ENCODE measurements at regions of chr17 and their contacts with region 1.

Region 1: DNA sequence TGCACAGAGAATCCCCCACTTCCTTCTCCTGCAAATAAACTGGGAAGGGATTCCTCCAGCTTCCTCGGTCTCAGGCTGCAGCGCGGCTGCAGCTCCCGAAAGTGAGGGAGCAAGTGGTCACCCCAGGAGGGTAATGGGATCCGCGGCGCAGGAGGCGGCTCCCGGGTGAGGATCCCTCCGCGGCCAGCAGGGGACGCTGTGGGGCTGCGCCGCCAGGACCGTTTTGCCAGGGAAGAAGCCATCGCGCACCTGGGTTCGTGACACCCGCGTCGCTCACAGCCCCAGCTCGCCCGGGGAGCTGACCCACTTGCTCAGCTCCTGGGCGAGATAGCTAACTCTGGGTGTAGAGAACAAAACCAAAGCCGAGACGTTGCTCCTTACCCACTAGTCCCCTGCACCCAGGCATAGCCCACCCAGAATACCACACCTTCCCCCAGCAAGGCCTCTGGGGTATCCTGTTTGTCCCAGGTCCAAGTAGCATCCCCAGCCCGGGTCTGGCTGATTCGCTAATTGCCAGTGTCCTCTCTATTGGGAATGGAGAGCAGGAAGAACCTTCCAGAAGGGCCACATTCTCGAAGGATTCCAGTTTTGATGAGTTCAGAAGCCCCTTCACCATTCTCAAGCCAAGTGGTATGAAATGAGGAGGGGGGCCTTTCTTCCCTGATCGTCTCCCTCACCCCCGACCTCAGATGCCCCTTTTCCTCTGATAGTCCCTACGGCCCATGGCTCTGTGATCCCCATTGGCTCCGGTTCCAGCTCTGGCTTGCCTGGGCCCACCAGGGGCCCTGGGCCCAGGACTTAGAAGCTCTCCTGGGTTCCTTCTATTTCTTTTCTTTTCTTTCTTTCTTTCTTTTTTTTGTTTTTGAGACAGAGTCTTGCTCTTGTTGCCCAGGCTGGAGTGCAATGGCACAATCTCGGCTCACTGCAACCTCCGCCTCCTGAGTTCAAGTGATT is 14.1 kb downstream of the CYGB start:
- DNase-seq: peak; percentile 82
- ATAC-seq: peak; percentile 88
- H3K4me3 Mint-ChIP-seq: no peak overlapping the region
- H3K27ac Mint-ChIP-seq: peak overlapping the region; percentile 46
- H3K4me1 Mint-ChIP-seq: peaks cover 15% of the 10 kb centered on the region
- H3K27me3 Mint-ChIP-seq: no peaks in the 10 kb centered on the region
- CTCF ChIP-seq: peak; percentile 100

Region 2: GRCh38 chr17:76501018-76501826 is 22.1 kb before region 1 on chr17 and contains the start of gene RHBDF2:
- CTCF ChIA-PET with region 1: interaction called, 20 read pairs
- POLR2A ChIA-PET with region 1: no interaction called
- intact Hi-C with region 1: no loop called
- DNase-seq: peak; percentile 95
- ATAC-seq: peak; percentile 97
- H3K4me3 Mint-ChIP-seq: peak within 1 kb of the TSS; percentile 90
- H3K27ac Mint-ChIP-seq: peak within 1 kb of the TSS; percentile 92
- H3K4me1 Mint-ChIP-seq: peaks cover 40% of the 10 kb centered on the region
- H3K27me3 Mint-ChIP-seq: no peaks in the 10 kb centered on the region
- CTCF ChIP-seq: no peak
- total RNA-seq, gene RHBDF2: 19.9 to 20.4 TPM

Region 3: DNA sequence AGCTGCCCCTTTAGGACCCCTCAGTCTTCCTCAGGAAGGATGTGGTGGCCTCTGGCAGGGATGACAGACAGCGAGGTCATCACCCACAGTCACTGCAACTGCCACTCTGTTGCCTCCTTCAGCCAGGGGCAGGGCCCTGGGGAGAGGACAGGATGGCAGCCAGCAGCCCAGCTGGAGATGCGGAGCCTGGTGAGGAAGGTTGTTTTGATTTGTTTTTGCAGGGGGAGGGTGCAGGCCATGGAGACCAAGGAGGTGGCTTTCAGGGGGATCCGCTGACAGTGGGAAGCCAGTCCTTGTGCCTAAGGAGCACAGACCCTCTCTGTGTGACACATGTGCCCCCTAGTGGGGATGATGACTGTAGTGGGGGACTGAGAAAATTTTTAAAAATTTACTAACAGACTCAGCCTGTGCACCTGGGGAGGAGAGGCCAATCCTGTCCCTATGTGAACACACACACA is 23.9 kb after region 1 on chr17:
- CTCF ChIA-PET with region 1: interaction called, 69 read pairs
- POLR2A ChIA-PET with region 1: interaction called, 12 read pairs
- intact Hi-C with region 1: no loop called
- DNase-seq: peak; percentile 70
- ATAC-seq: peak; percentile 89
- H3K4me3 Mint-ChIP-seq: no peak overlapping the region
- H3K27ac Mint-ChIP-seq: no peak overlapping the region
- H3K4me1 Mint-ChIP-seq: peaks cover 5% of the 10 kb centered on the region
- H3K27me3 Mint-ChIP-seq: peaks cover 4% of the 10 kb centered on the region
- CTCF ChIP-seq: peak; percentile 67

Region 4: GRCh38 chr17:76585818-76586593 is 62.6 kb after region 1 on chr17 and contains the start of gene ST6GALNAC2:
- CTCF ChIA-PET with region 1: interaction called, 11 read pairs
- POLR2A ChIA-PET with region 1: interaction called, 3 read pairs
- intact Hi-C with region 1: no loop called
- DNase-seq: peak; percentile 50
- ATAC-seq: peak; percentile 89
- H3K4me3 Mint-ChIP-seq: peak within 1 kb of the TSS; percentile 53
- H3K27ac Mint-ChIP-seq: no peak within 1 kb of the TSS
- H3K4me1 Mint-ChIP-seq: peaks cover 10% of the 10 kb centered on the region
- H3K27me3 Mint-ChIP-seq: peaks cover 47% of the 10 kb centered on the region
- CTCF ChIP-seq: no peak
- total RNA-seq, gene ST6GALNAC2: not detected

Region 5: DNA sequence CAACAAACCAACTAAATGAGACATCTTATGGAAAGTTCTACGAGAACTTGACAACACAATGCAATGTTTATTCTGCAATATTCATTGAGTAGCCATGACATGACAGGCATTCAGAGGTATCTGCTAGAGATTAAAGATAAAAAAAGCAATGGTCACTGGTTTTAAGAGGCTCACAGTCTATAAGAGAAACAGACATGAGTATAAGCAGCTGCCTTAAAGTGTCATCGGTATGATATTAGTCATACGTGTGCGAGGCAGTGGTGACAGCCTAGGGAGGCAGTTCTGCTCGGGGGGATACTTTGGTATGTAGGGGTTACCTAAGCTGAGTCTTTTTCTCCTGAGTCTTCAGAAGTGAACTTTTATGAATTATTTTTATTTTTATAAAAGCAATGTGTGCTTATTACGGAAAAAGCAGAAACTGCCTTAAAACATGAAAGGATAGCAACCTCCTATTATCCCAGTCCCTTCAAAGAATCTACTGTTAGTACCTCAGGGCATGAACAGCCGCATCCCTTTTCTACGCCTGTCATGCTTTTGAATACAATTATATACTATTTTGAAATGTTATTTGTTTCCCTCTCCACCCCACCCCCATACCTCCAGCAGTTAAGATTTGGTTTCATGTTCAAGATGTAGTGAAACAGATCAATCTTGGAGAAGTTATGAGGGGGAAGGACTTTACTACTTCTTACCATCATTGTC is 112.4 kb after region 1 on chr17:
- CTCF ChIA-PET with region 1: interaction called, 10 read pairs
- POLR2A ChIA-PET with region 1: no interaction called
- intact Hi-C with region 1: no loop called
- DNase-seq: no peak
- ATAC-seq: no peak
- H3K4me3 Mint-ChIP-seq: no peak overlapping the region
- H3K27ac Mint-ChIP-seq: no peak overlapping the region
- H3K4me1 Mint-ChIP-seq: no peaks in the 10 kb centered on the region
- H3K27me3 Mint-ChIP-seq: no peaks in the 10 kb centered on the region
- CTCF ChIP-seq: no peak

Region 6: GRCh38 chr17:76695059-76695831 is 171.9 kb after region 1 on chr17:
- CTCF ChIA-PET with region 1: no interaction called
- POLR2A ChIA-PET with region 1: no interaction called
- intact Hi-C with region 1: no loop called
- DNase-seq: no peak
- ATAC-seq: no peak
- H3K4me3 Mint-ChIP-seq: no peak overlapping the region
- H3K27ac Mint-ChIP-seq: no peak overlapping the region
- H3K4me1 Mint-ChIP-seq: no peaks in the 10 kb centered on the region
- H3K27me3 Mint-ChIP-seq: no peaks in the 10 kb centered on the region
- CTCF ChIP-seq: no peak

Region 7: GRCh38 chr17:76714822-76715495 is 191.6 kb after region 1 on chr17:
- CTCF ChIA-PET with region 1: interaction called, 16 read pairs
- POLR2A ChIA-PET with region 1: no interaction called
- intact Hi-C with region 1: no loop called
- DNase-seq: peak; percentile 90
- ATAC-seq: no peak
- H3K4me3 Mint-ChIP-seq: peak overlapping the region; percentile 53
- H3K27ac Mint-ChIP-seq: peak overlapping the region; percentile 92
- H3K4me1 Mint-ChIP-seq: peaks cover 61% of the 10 kb centered on the region
- H3K27me3 Mint-ChIP-seq: no peaks in the 10 kb centered on the region
- CTCF ChIP-seq: peak; percentile 88

Measured in activated CD8-positive, alpha-beta T cell treated with anti-CD3 and anti-CD28 coated beads for 36 hours (primary cell).